Heart left ventricle (tissue), 16 donors: ENCODE measurements at regions of chr12 and their contacts with region 1.

Region 1: DNA sequence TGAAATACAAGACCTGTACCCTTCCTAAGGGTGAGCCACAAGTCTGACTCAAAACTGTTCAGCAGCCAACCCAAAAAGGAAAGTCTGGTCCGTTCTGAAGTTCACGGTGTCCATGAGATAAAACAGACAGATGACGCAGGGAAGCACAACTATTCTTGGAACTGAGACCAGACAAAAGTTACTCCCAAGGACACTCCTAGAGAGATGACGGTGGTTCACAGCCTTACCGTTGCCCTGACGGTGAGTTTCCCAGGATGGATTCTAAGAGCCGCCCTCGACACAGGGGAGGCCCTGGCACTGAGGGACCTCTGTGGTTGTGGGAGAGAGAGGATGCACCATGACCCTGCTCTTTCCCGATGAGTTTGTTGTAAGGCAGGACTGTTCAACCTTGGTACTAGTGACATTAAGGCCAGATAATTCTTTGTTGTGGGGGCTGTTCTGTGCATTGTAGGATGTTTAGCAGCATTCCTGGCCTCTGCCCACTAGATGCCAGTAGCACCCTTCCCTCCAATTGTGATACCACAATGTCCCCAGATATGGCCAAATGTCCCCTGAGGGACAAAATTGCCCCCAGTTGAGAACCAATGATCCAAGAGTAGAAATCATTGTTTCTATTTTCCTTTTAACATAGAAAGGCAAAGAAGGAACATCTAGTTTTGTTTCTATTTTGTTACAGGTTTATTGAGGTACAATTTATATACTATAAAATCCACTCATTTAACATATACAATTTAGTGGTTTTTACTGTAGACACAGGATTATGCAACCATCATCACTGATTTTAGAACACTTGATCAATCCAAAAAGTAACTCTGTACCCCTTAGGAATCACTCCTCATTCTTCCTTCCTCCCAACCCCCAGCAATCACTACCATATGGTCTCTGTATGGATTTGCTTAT is 23.0 kb downstream of the OR10P1 start:
- DNase-seq: peak in 4 of 5 donors; percentile 46 to 85 (median 63)
- ATAC-seq: peak; percentile 91 to 93 (median 92)
- H3K4me3 ChIP-seq: peak overlapping the region in 5 of 12 donors; percentile 0 to 21 (median 10)
- H3K27ac ChIP-seq: peak overlapping the region; percentile 79 to 94 (median 91)
- H3K4me1 ChIP-seq: peaks cover 0 to 35% (median 12%) of the 10 kb centered on the region in 12 donors
- H3K27me3 ChIP-seq: no peaks in the 10 kb centered on the region
- CTCF ChIP-seq: peak; percentile 21 to 59 (median 49)
- POLR2A ChIP-seq: peak; percentile 59 to 61

Region 2: DNA sequence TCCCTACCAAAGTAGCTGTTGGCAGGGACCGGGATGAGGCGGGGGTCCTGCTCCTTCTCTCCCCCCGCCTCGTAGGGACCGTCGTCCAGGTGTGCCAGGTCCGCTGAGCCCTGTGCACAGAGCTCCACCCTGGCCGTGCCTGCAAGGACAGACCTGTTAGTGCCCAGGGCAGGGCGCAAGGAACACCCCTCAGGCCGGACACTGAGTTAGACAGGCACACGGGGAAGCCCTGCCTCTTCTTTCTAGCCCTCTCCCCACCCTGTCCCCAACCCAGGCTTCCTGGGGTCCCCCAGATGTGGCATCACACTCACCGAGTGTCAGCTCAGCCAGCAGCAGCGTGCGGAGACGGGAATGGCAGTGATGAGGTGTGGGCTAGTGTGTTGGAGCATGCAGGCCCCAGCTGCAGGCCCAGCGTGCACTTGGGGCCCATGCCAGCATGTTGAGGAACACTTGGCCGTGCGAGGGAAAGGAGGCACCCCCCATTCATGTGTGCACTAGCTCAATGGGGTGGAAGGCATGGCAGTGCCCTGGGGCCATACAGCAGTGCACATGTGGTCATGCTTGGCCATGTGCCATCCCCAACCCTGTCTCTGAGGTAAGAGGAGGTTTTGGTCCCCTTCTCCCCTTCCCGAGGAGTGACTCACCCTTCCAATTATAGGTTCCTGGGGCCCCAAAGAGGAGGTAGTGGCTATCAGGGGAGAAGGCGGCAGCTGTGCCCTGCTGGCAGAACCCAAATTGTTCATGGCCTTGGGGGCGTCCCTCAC is 40.7 kb after region 1 on chr12:
- intact Hi-C with region 1: loop called in 1 of 10 experiments (anchors 5 kb)
- DNase-seq: peak in 3 of 5 donors; percentile 51 to 74 (median 67)
- ATAC-seq: peak; percentile 7 to 34 (median 30)
- H3K4me3 ChIP-seq: no peak overlapping the region
- H3K27ac ChIP-seq: peak overlapping the region in 10 of 12 donors; percentile 6 to 99 (median 46)
- H3K4me1 ChIP-seq: peaks cover 0 to 61% (median 27%) of the 10 kb centered on the region in 12 donors
- H3K27me3 ChIP-seq: no peaks in the 10 kb centered on the region
- CTCF ChIP-seq: no peak
- POLR2A ChIP-seq: no peak

Region 3: DNA sequence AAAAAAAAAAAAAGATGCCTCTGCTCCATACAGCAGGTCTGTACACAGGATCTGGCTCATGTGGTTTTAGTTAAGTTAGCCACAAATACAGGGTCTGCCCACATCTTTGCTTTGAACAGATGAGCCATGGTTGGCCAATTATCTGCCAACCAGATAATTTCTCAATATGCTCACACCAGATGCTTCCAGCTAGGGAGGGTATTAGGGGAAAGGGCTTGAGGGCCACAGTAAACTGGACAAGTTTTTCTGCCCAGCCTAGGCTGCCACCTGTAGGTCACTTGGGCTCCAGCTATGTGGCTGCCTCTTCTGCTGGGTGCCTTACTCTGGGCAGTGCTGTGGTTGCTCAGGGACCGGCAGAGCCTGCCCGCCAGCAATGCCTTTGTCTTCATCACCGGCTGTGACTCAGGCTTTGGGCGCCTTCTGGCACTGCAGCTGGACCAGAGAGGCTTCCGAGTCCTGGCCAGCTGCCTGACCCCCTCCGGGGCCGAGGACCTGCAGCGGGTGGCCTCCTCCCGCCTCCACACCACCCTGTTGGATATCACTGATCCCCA is 61.2 kb after region 1 on chr12:
- intact Hi-C with region 1: loop called in 1 of 10 experiments (anchors 1 kb)
- DNase-seq: peak; percentile 54 to 88 (median 77)
- ATAC-seq: peak; percentile 44 to 67 (median 62)
- H3K4me3 ChIP-seq: peak overlapping the region in 1 of 12 donors; percentile 15
- H3K27ac ChIP-seq: peak overlapping the region; percentile 22 to 99 (median 93)
- H3K4me1 ChIP-seq: peaks cover 4 to 90% (median 79%) of the 10 kb centered on the region in 12 donors
- H3K27me3 ChIP-seq: no peaks in the 10 kb centered on the region
- CTCF ChIP-seq: peak; percentile 42 to 77 (median 59)
- POLR2A ChIP-seq: peak in 1 of 2 donors; percentile 19

Region 4: GRCh38 chr12:56258057-56258819 is 598.5 kb after region 1 on chr12 and contains the start of gene ANKRD52:
- intact Hi-C with region 1: no loop called
- DNase-seq: peak; percentile 76 to 90 (median 83)
- ATAC-seq: peak; percentile 65 to 97 (median 93)
- H3K4me3 ChIP-seq: peak within 1 kb of the TSS; percentile 60 to 99 (median 96)
- H3K27ac ChIP-seq: peak within 1 kb of the TSS; percentile 51 to 97 (median 90)
- H3K4me1 ChIP-seq: peaks cover 5 to 29% (median 23%) of the 10 kb centered on the region in 12 donors
- H3K27me3 ChIP-seq: no peaks in the 10 kb centered on the region
- CTCF ChIP-seq: peak in 11 of 12 donors; percentile 43 to 94 (median 83)
- POLR2A ChIP-seq: peak in 1 of 2 donors; percentile 35
- total RNA-seq, gene ANKRD52: 19.3 to 40.6 (median 28.0) TPM